Dorsolateral prefrontal cortex (tissue), 120 donors: ENCODE measurements at regions of chr10 and their contacts with region 1.

Region 1: DNA sequence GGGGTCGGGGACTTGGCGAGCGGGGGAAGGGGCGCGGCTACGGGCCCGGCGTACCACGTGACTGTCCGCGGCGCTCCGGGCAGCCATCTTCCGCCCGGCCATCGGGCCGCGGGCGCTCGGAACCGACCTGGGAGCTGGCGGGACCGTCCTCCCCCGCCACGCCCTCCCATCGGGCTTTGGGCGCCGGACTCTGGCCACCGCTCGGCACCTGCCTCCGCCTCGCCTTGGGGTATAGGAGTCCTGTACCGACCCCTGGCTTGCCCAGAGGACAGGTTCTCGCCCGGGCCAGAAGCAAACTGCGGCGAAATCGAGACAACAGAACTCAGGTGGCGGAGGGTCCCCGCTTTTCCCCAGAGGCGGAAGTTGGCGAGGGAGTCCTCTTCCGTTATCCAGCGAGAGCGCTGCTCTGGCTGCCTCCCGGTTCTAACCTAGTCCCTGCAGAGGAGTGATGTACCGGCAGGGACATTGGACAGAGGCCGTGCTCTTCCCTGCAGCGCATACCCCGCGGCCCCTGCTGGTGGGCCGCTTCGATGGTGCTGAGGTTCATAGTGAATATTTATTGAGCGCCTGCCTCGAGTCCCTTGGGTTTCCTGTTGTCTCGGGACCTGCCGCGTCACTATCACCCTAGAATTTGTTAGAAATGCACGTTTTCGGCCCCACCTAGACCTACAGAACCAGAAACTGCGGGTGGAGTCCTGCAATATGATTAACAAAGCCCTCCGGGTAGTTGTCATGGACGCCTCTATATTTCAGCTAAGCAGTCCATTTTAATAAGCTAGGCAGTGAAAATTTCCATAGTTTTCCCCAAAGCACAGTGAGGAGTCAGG is 1.3 kb upstream of the SGMS1 start:
- DNase-seq: peak; percentile 52 to 88 (median 72)
- H3K4me3 ChIP-seq: peak overlapping the region; percentile 64 to 99 (median 92)
- H3K27ac ChIP-seq: peak overlapping the region; percentile 79 to 100 (median 100)
- H3K27me3 ChIP-seq: no peaks in the 10 kb centered on the region
- CTCF ChIP-seq: peak; percentile 34 to 81 (median 65)

Region 2: DNA sequence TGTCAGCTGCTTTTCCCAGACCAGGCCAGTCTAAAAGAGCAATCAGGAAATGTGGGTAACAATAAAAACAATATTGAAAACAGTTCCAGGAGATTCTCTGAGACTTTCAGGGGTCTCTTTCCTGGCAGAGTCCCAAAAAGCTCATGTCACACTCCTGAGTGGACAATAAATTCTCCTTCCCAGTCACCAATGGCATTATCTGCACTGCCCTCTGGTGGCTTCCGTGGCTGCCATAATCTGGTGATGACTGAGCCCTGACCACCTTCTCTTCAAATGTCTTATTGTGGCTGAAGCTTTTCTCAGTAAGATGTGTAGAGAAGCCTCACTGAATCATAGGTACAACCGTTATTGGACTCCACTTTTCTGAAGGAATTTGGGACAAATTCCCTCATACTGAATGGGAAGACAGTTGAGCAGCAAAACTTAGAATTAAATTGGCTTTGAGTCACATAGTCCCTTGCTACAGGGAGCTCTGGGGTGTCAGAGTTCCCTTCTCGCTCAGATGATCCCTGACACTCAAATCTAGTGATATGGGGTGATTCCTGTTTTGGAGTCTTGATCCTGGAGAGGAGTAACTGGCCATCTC is 349.3 kb before region 1 on chr10:
- intact Hi-C with region 1: loop called in 1 of 2 experiments (anchors 5 kb)
- DNase-seq: peak in 6 of 10 donors; percentile 24 to 60 (median 46)
- H3K4me3 ChIP-seq: no peak overlapping the region
- H3K27ac ChIP-seq: no peak overlapping the region
- H3K27me3 ChIP-seq: peaks cover 0 to 4% (median 0%) of the 10 kb centered on the region in 45 donors
- CTCF ChIP-seq: peak in 54 of 56 donors; percentile 21 to 73 (median 58)

Region 3: GRCh38 chr10:50291261-50291850 is 333.7 kb before region 1 on chr10:
- intact Hi-C with region 1: loop called (anchors 5 kb)
- DNase-seq: no peak
- H3K4me3 ChIP-seq: no peak overlapping the region
- H3K27ac ChIP-seq: no peak overlapping the region
- H3K27me3 ChIP-seq: no peaks in the 10 kb centered on the region
- CTCF ChIP-seq: peak in 53 of 56 donors; percentile 17 to 74 (median 48)

Region 4: DNA sequence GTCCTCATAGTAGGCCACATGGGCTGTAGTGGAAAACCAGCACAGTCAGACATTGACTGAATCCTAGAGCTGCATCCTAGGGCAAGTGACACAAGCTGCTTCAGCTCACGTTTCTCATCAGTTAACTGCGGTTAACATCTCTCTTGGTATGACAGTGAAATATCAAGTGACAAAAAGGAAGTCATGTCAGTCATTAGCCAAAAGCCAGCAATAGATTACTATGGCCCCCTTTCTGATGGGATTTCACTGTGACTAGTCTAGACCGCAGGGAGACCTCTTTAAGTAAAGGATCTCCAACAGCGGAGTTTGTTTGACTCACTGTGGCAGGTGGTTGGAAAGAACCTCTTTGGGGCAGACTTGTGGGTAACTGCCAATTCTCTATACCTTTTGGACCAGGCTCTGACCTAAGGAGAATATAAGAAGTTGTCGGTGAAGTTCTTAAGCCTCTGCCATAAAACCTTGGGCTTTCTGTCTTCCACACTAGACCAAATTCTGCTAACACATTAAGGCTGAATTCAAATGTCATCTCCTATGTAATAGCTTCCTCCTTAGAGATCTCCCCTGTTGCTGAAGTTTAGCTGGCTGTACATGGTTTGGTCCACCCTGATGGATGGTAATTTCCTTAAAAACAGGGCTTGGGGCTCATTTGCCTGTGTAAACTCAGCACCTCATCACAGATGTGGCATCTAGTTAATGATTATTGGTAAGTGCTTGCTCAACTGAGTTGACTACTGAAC is 116.6 kb before region 1 on chr10:
- intact Hi-C with region 1: loop called (anchors 5 kb)
- DNase-seq: no peak
- H3K4me3 ChIP-seq: no peak overlapping the region
- H3K27ac ChIP-seq: peak overlapping the region; percentile 79 to 100 (median 97)
- H3K27me3 ChIP-seq: no peaks in the 10 kb centered on the region
- CTCF ChIP-seq: no peak

Region 5: GRCh38 chr10:50561816-50562215 is 63.3 kb before region 1 on chr10:
- intact Hi-C with region 1: loop called in 1 of 2 experiments (anchors 5 kb)
- DNase-seq: no peak
- H3K4me3 ChIP-seq: peak overlapping the region in 1 of 59 donors; percentile 14
- H3K27ac ChIP-seq: peak overlapping the region in 53 of 59 donors; percentile 2 to 87 (median 64)
- H3K27me3 ChIP-seq: no peaks in the 10 kb centered on the region
- CTCF ChIP-seq: peak in 55 of 56 donors; percentile 2 to 69 (median 53)

Region 6: GRCh38 chr10:50577681-50578350 is 47.3 kb before region 1 on chr10:
- intact Hi-C with region 1: loop called (anchors 1 to 2 kb)
- DNase-seq: peak in 4 of 10 donors; percentile 37 to 49 (median 43)
- H3K4me3 ChIP-seq: peak overlapping the region in 17 of 59 donors; percentile 3 to 28 (median 19)
- H3K27ac ChIP-seq: peak overlapping the region in 55 of 59 donors; percentile 3 to 92 (median 76)
- H3K27me3 ChIP-seq: no peaks in the 10 kb centered on the region
- CTCF ChIP-seq: peak in 1 of 56 donors; percentile 15

Region 7: GRCh38 chr10:50909334-50910014 is 284.4 kb after region 1 on chr10:
- intact Hi-C with region 1: no loop called
- DNase-seq: no peak
- H3K4me3 ChIP-seq: no peak overlapping the region
- H3K27ac ChIP-seq: no peak overlapping the region
- H3K27me3 ChIP-seq: no peaks in the 10 kb centered on the region
- CTCF ChIP-seq: no peak